Endothelial cell of umbilical vein (primary cell): ENCODE measurements at regions of chr11 and their contacts with region 1.

Region 1: GRCh38 chr11:34809191-34810106 is 106.7 kb downstream of the APIP start:
- DNase-seq: peak; percentile 98
- H3K4me3 ChIP-seq: no peak overlapping the region
- H3K27ac ChIP-seq: peak overlapping the region; percentile 80
- H3K4me1 ChIP-seq: peaks cover 24% of the 10 kb centered on the region
- H3K27me3 ChIP-seq: no peaks in the 10 kb centered on the region
- CTCF ChIP-seq: no peak
- POLR2A ChIP-seq: peak; percentile 91

Region 2: DNA sequence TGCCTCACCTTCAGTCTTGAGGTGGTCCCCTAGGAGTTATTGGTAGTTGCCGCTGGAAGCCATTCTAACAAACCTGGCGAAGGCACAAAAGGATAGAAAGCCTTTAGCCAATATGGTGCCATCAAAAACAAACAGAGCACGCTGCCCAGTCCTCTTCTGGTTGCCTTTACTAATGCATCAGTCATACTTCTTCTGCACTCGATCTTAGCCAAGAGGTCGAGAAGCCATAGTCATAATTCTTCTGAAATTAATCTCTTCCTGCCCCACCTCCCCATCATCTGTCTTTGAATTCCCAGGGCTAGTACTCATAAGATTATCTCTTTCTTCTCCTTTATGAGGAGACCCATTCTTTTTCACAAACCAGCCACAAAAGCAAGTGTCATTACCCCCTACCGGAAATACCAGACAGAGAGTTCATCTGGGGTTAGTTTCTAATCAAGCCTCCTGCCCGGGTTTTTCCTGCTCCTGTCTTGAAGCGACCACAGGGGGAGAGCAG is 210.0 kb before region 1 on chr11:
- CTCF ChIA-PET with region 1: no interaction called
- POLR2A ChIA-PET with region 1: no interaction called
- dilution Hi-C with region 1: no loop called
- intact Hi-C with region 1: loop called (anchors 1 kb)
- DNase-seq: peak; percentile 56
- H3K4me3 ChIP-seq: no peak overlapping the region
- H3K27ac ChIP-seq: no peak overlapping the region
- H3K4me1 ChIP-seq: peaks cover 16% of the 10 kb centered on the region
- H3K27me3 ChIP-seq: no peaks in the 10 kb centered on the region
- CTCF ChIP-seq: no peak
- POLR2A ChIP-seq: no peak

Region 3: DNA sequence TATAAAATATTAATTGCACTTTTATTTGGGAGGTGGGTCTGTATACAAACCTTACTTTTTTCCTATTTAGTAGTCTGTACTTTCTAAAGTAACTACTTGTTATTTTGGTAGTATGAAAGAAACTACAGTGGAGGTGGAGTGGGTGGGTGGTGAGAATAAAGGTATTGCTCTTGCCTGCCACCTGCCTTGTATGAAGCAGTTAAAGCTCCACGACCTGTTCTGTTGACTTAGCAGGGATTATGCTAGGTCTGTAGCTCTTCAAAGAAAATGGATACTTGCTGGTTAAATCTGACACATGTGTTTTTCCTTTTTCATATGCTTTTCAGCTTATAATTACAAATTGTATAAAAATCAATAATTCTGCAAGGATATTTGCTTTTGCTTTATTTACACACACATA is 76.6 kb before region 1 on chr11:
- CTCF ChIA-PET with region 1: no interaction called
- POLR2A ChIA-PET with region 1: no interaction called
- dilution Hi-C with region 1: no loop called
- intact Hi-C with region 1: no loop called
- DNase-seq: no peak
- H3K4me3 ChIP-seq: no peak overlapping the region
- H3K27ac ChIP-seq: no peak overlapping the region
- H3K4me1 ChIP-seq: no peaks in the 10 kb centered on the region
- H3K27me3 ChIP-seq: peaks cover 0 to 10% of the 10 kb centered on the region in 2 experiments
- CTCF ChIP-seq: no peak
- POLR2A ChIP-seq: no peak

Region 4: DNA sequence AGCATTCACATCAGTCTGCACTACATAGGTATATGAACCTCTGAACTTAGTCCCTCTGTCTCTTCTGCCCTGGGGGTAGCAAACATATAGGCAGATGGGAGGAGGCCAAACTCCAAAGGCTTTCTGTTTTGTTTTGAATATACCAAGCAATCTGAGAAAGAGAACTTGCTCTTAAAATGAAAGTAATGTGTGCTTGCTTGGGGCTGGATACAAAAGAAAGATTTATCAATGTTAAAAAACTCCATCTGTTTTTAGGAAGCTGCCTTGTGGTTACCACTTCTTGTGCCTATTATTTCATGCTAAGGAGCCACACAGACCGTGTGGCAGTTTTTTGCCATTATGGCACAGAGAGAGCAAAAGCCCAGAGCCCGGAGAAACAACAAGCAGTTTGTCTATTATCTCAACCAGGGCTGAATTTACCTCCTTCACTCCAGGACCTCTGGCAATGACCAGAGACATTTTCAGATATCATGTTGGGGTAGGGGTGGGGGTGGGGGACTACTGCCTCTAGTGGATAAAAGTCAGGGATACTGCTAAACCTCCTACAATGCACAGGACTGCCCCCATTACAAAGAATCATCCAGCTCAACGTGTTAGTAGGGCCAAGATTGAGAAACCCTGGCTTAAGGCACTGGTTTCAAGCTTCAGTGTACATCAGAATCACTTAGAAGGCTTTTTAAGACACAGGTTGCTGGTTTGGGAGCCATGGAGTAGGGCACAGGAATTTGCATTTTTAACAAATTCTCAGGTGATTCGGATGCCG is 17.5 kb before region 1 on chr11:
- CTCF ChIA-PET with region 1: interaction called, 34 read pairs
- POLR2A ChIA-PET with region 1: interaction called, 3 read pairs
- dilution Hi-C with region 1: no loop called
- intact Hi-C with region 1: loop called (anchors 1 kb)
- DNase-seq: peak; percentile 27
- H3K4me3 ChIP-seq: no peak overlapping the region
- H3K27ac ChIP-seq: no peak overlapping the region
- H3K4me1 ChIP-seq: peaks cover 13% of the 10 kb centered on the region
- H3K27me3 ChIP-seq: no peaks in the 10 kb centered on the region
- CTCF ChIP-seq: peak in 1 of 2 donors; percentile 11
- POLR2A ChIP-seq: no peak

Region 5: DNA sequence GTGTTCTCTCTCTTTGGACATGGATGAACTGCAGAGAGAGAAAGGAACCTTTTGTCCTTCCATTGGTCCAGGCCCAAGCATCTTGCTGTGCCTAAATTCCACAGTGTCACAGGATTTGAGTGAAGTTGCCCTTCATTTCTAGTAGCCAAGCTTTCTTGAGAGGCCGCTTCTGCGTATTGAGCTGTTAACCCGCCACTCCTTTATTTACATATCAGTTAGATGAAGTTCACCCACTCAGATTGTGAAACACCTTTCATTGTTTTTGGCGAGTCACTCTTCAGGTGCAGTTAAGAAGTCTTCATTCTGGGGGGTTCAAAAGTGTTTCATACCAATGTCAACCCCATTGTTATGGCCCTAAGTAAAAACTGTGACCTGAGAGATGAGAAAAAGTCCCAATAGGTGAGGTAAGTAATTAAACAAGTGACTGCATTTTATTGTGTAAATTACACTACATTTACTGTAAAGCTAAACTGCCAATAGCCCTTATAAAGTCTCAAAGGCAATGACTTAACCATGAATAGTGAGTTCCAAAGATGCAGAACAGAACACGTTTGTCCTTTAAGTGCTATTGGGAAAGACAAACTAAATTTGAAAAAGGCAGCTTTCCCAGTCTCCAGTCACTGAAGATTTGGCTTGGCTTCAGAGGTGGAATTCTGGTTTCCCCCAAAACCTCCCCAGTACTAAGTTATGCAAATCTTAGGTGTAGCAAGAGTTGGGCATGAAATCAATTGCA is 45.7 kb after region 1 on chr11:
- CTCF ChIA-PET with region 1: no interaction called
- POLR2A ChIA-PET with region 1: no interaction called
- dilution Hi-C with region 1: no loop called
- intact Hi-C with region 1: no loop called
- DNase-seq: no peak
- H3K4me3 ChIP-seq: no peak overlapping the region
- H3K27ac ChIP-seq: no peak overlapping the region
- H3K4me1 ChIP-seq: no peaks in the 10 kb centered on the region
- H3K27me3 ChIP-seq: peaks cover 3 to 15% of the 10 kb centered on the region in 2 experiments
- CTCF ChIP-seq: no peak
- POLR2A ChIP-seq: no peak

Region 6: GRCh38 chr11:34890812-34891211 is 81.4 kb after region 1 on chr11:
- CTCF ChIA-PET with region 1: interaction called, 10 read pairs
- POLR2A ChIA-PET with region 1: no interaction called
- dilution Hi-C with region 1: no loop called
- intact Hi-C with region 1: loop called (anchors 5 kb)
- DNase-seq: peak; percentile 58
- H3K4me3 ChIP-seq: no peak overlapping the region
- H3K27ac ChIP-seq: no peak overlapping the region
- H3K4me1 ChIP-seq: no peaks in the 10 kb centered on the region
- H3K27me3 ChIP-seq: no peaks in the 10 kb centered on the region
- CTCF ChIP-seq: peak in 1 of 2 donors; percentile 12
- POLR2A ChIP-seq: no peak

Region 7: DNA sequence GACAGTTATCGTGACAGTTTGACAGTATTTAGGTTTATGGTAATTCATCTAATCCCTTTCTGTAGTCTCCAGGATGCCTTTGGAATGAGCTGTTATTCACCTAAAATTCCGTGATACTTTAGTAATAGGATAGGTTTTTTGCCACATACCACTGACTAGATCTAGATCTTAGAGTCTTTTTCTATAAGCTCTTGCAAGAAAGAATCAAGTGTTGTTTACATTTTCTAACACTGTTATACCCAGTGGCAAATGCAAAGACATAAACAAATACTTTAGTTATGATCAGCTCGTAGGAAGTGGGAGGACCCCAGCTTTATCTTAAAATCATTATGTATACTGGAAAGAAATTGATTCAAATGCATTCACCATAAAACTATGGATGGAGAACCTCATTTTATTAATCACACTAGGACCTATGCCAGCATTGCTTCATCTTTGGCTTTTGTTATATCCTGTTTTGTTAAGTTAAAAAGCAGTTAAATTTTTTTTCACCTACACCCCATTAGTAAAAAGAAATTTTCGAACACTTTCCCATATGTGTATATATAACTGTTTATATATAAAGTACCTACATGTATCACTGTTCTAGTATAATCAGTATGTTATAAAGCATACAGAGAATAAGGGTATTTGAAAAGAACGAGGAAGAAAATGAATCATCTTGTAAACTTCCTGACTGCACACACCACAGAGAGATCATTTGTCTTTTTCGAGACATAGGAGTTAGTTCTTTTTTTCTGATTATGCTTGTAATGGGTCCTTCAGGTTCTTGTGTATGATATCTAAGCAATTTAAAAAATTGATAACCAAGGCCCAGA is 167.8 kb after region 1 on chr11:
- CTCF ChIA-PET with region 1: interaction called, 5 read pairs
- POLR2A ChIA-PET with region 1: no interaction called
- dilution Hi-C with region 1: no loop called
- intact Hi-C with region 1: loop called (anchors 1 kb)
- DNase-seq: peak; percentile 79
- H3K4me3 ChIP-seq: peak overlapping the region in 2 of 3 experiments; percentile 23 to 42
- H3K27ac ChIP-seq: peak overlapping the region; percentile 75
- H3K4me1 ChIP-seq: peaks cover 41% of the 10 kb centered on the region
- H3K27me3 ChIP-seq: no peaks in the 10 kb centered on the region
- CTCF ChIP-seq: no peak
- POLR2A ChIP-seq: no peak